ENCODE measurements at regions of chr12 and their contacts with region 1.

Region 1: DNA sequence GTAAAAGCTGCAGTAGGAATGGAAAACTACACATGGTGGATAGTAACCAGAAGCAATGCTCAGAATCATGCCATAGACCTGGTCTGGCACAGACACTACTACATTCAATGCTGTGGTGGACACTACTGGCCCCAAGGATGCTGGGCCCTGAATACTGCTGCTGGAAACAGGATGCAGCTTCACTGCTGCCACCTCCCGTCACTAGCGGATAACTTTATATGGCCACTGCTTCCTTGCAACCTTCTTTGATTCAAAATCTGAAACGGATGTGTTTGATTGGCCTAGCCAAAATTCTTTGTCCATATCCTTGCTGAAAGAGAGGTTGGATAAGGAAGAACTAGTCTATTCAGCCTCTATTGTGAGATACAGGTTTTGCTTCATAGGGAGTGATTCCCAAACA is 30.7 kb downstream of the ADCY6 start:
- DNase-seq: peak; percentile 27
- H3K4me3 ChIP-seq: no peak overlapping the region
- H3K27ac ChIP-seq: no peak overlapping the region
- H3K4me1 ChIP-seq: peaks cover 0 to 4% (median 0%) of the 10 kb centered on the region in 4 donors
- H3K27me3 ChIP-seq: no peaks in the 10 kb centered on the region
- CTCF ChIP-seq: no peak
- EP300 ChIP-seq: no peak
- POLR2A ChIP-seq: no peak

Region 2: DNA sequence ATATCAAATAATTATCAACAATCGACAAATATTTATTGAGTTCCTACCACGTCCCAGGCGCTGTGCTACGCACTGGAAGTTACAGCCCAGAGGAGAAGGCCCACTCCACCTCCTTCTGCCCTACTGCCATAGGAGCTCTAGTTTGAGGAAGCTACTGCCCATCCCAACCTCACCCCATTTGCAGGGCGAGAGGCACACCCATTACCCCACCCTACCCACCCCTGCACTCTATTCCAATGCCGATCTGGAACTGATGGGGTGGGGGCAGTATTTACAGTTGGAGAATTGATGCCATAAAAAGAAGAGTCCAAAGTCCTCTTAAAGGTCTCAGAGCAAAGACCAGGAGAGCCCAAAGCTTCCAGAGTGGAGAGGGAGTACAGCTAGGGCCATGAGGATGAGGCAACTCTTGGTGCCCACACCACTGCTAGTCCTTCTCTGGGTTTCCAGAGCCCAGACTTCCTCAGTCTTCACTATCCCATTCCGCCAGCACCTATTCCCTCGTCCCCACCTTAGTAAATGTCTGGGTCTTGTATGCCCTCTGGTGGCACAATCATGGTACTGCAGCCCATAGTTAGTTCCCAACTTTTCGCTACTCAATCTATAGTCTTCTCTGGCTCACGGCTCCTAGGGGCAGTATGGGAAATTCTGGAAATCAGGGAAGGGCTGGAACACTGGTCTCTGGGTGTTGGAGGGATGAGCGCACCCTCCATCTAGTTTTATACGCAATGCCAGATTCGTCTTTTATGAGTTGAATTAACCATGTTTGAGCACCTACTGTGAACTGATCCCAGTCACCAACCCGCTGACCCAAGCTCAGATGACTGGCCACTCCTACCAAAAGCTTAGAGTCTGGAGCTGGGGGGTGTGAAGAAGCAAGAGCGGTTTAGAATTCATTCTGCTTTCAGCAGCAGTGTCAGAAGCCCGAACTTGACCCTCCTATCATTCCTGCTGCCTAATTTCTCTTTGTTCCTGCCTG is 37.5 kb after region 1 on chr12:
- intact Hi-C with region 1: loop called (anchors 1 kb)
- DNase-seq: peak; percentile 86
- H3K4me3 ChIP-seq: no peak overlapping the region
- H3K27ac ChIP-seq: no peak overlapping the region
- H3K4me1 ChIP-seq: peaks cover 0 to 5% (median 2%) of the 10 kb centered on the region in 4 donors
- H3K27me3 ChIP-seq: peaks cover 0 to 10% (median 8%) of the 10 kb centered on the region in 3 donors
- CTCF ChIP-seq: peak; percentile 94 to 99 (median 96)
- EP300 ChIP-seq: no peak
- POLR2A ChIP-seq: no peak